HEK293 (cell line): ENCODE measurements at regions of chr18 and their contacts with region 1.

Region 1: DNA sequence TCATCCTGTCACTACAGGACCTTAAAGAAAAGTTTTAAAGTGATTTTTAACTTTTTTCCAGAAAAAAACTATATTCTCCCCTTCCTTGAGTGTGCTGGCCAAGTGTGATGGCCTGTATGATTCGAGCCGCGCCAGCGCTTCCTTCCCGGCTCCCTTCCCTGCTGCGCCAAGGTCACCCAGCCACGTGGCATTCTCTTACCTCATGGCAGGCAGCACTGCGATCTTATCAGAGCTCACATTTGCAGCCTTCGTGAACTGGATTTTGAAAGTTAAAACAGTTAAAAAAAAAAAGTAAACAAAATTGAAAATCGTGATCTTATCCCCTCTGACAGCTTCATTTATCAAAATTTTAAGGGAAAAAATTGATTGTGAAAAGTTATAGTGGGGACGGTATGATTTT is 279.8 kb downstream of the PTGR3 start:
- H3K4me3 ChIP-seq: no peak overlapping the region
- H3K27ac ChIP-seq: no peak overlapping the region
- H3K4me1 ChIP-seq: no peaks in the 10 kb centered on the region
- CTCF ChIP-seq: no peak

Region 2: GRCh38 chr18:74722237-74722636 is 206.9 kb before region 1 on chr18:
- CTCF ChIA-PET with region 1: no interaction called
- POLR2A ChIA-PET with region 1: no interaction called
- H3K4me3 ChIP-seq: no peak overlapping the region
- H3K27ac ChIP-seq: no peak overlapping the region
- H3K4me1 ChIP-seq: no peaks in the 10 kb centered on the region
- CTCF ChIP-seq: no peak

Region 3: DNA sequence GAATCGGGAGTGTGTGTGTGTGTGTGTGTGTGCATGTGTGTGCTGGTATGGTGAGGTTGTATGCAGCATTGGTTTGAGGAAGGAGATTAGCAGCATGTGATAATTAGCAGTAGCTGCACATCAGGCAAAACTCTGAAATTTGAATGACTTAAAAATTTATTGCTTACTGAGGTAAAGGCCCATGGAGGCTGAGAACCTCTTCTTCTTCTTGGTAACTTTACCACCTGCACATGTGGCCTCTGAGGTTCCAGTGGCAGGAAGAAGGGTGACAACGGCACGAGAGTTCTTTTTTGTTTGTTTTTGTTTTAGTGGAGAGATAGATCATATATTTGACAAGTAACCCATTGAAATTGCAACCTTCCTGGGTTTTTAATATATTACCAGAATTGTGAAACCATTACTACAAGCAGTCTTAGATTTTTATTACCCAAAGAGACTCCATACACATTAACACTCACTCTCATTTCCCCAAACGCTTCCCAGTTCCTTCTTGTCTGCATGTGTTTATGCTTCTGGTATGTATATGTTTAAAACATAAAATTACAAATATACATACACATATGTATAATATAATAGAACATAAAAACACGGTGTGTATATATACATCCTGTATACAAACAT is 12.2 kb before region 1 on chr18:
- CTCF ChIA-PET with region 1: no interaction called
- POLR2A ChIA-PET with region 1: no interaction called
- H3K4me3 ChIP-seq: no peak overlapping the region
- H3K27ac ChIP-seq: no peak overlapping the region
- H3K4me1 ChIP-seq: peaks cover 11% of the 10 kb centered on the region; the same call in 1 of the 2 replicates
- CTCF ChIP-seq: no peak

Region 4: DNA sequence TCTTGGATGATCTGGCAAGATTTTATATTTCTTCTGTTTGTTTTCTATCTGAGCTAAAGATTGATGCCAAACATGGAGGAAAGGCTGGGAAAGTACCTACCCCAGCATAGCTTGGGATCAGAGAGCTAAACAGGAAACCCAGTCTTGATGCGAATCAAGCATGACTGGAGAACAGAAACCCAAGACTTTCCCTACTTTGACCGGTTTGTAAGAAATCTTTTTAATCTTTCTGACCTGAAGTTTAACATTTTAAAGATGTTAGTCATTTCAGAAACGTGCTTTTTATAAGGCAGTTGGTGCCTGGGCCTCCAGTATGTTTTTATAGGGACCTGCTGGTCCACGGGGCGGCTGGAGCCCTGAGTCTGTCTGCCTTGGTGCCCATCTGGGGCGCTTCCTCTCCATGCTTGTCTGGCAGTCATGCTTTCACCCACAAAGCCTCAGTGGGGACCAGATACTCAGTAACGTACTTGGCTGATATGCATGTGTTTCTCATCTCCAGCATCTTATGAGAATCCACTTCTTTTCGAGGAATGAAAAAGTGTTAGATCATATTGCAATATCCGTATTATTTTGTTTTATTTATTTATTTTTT is 13.3 kb after region 1 on chr18:
- CTCF ChIA-PET with region 1: interaction called, 10 read pairs
- POLR2A ChIA-PET with region 1: no interaction called
- H3K4me3 ChIP-seq: no peak overlapping the region
- H3K27ac ChIP-seq: no peak overlapping the region
- H3K4me1 ChIP-seq: peaks cover 10% of the 10 kb centered on the region
- CTCF ChIP-seq: no peak